A549 (cell line): ENCODE measurements at regions of chr10 and their contacts with region 1.

Region 1: GRCh38 chr10:114550756-114551635 is 107.1 kb downstream of the ABLIM1 start:
- DNase-seq: peak; percentile 9 to 17
- ATAC-seq: peak in 1 of 2 experiments; percentile 30; a peak in 2 of 6 replicates
- H3K4me3 ChIP-seq: no peak overlapping the region
- H3K27ac ChIP-seq: no peak overlapping the region
- H3K4me1 ChIP-seq: no peaks in the 10 kb centered on the region
- CTCF ChIP-seq: peak; percentile 79
- EP300 ChIP-seq: no peak
- POLR2A ChIP-seq: no peak
- RAD21 ChIP-seq: peak; percentile 78 to 93

Region 2: GRCh38 chr10:114420811-114421485 is 130.0 kb before region 1 on chr10:
- CTCF ChIA-PET with region 1: no interaction called
- POLR2A ChIA-PET with region 1: no interaction called
- DNase-seq: no peak
- ATAC-seq: no peak
- H3K4me3 ChIP-seq: no peak overlapping the region
- H3K27ac ChIP-seq: no peak overlapping the region
- H3K4me1 ChIP-seq: no peaks in the 10 kb centered on the region
- CTCF ChIP-seq: no peak
- EP300 ChIP-seq: no peak
- POLR2A ChIP-seq: no peak
- RAD21 ChIP-seq: no peak

Region 3: GRCh38 chr10:114532226-114532625 is 18.8 kb before region 1 on chr10:
- CTCF ChIA-PET with region 1: interaction called, 42 read pairs
- POLR2A ChIA-PET with region 1: no interaction called
- DNase-seq: no peak
- ATAC-seq: no peak
- H3K4me3 ChIP-seq: no peak overlapping the region
- H3K27ac ChIP-seq: no peak overlapping the region
- H3K4me1 ChIP-seq: peaks cover 4% of the 10 kb centered on the region
- CTCF ChIP-seq: no peak
- EP300 ChIP-seq: no peak
- POLR2A ChIP-seq: no peak
- RAD21 ChIP-seq: no peak

Region 4: GRCh38 chr10:114565066-114565465 is 14.1 kb after region 1 on chr10:
- CTCF ChIA-PET with region 1: interaction called, 51 read pairs
- POLR2A ChIA-PET with region 1: no interaction called
- DNase-seq: no peak
- ATAC-seq: no peak
- H3K4me3 ChIP-seq: no peak overlapping the region
- H3K27ac ChIP-seq: no peak overlapping the region
- H3K4me1 ChIP-seq: no peaks in the 10 kb centered on the region
- CTCF ChIP-seq: no peak
- EP300 ChIP-seq: no peak
- POLR2A ChIP-seq: no peak
- RAD21 ChIP-seq: no peak

Region 5: DNA sequence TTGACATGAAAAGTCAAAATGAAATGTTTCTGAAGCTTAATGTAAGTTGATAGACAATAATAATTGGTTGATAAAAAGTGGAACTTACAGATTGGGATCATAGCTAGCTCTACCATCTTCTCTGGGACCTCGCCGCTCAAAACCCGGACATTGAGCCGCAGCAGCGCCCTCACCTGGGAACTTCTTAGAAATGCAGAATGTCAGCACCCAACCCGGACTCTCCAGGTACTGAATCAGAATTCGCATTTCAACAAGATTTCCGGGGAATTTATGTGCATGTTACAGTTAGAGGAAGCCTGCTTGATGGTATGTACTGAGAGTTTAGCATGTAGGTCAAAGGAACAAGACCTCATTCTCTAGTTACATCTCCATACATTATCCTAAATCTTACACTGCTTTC is 143.8 kb after region 1 on chr10:
- CTCF ChIA-PET with region 1: interaction called, 113 read pairs
- POLR2A ChIA-PET with region 1: no interaction called
- DNase-seq: peak; percentile 57 to 73
- ATAC-seq: peak; percentile 79 to 89
- H3K4me3 ChIP-seq: no peak overlapping the region
- H3K27ac ChIP-seq: peak overlapping the region in 1 of 2 experiments; percentile 8; a peak in 1 of 6 replicates
- H3K4me1 ChIP-seq: peaks cover 46% of the 10 kb centered on the region
- CTCF ChIP-seq: peak; percentile 74
- EP300 ChIP-seq: no peak
- POLR2A ChIP-seq: no peak
- RAD21 ChIP-seq: peak; percentile 84

Region 6: GRCh38 chr10:114703377-114704107 is 152.5 kb after region 1 on chr10:
- CTCF ChIA-PET with region 1: interaction called, 113 read pairs
- POLR2A ChIA-PET with region 1: no interaction called
- DNase-seq: peak; percentile 38 to 45
- ATAC-seq: peak; percentile 68 to 83; a peak in 4 of 6 replicates
- H3K4me3 ChIP-seq: no peak overlapping the region
- H3K27ac ChIP-seq: no peak overlapping the region
- H3K4me1 ChIP-seq: peaks cover 7% of the 10 kb centered on the region
- CTCF ChIP-seq: peak; percentile 86
- EP300 ChIP-seq: no peak
- POLR2A ChIP-seq: no peak
- RAD21 ChIP-seq: peak; percentile 93 to 95

Region 7: GRCh38 chr10:114821293-114821914 is 270.4 kb after region 1 on chr10 and contains the start of gene FHIP2A:
- CTCF ChIA-PET with region 1: interaction called, 15 read pairs
- POLR2A ChIA-PET with region 1: no interaction called
- DNase-seq: peak; percentile 61 to 75
- ATAC-seq: peak; percentile 89
- H3K4me3 ChIP-seq: peak within 1 kb of the TSS; percentile 70
- H3K27ac ChIP-seq: peak within 1 kb of the TSS; percentile 88 to 100
- H3K4me1 ChIP-seq: peaks cover 36% of the 10 kb centered on the region
- CTCF ChIP-seq: peak; percentile 95
- EP300 ChIP-seq: no peak
- POLR2A ChIP-seq: 0 out of 2 replicates have a peak, but pooled peaks have one; percentile 19
- RAD21 ChIP-seq: peak; percentile 30 to 53; a peak in 3 of 5 replicates
- polyA plus RNA-seq, gene FHIP2A: 18.2 and 18.4 TPM in 2 replicates